T-cell (primary cell): ENCODE measurements at regions of chr13 and their contacts with region 1.

Region 1: DNA sequence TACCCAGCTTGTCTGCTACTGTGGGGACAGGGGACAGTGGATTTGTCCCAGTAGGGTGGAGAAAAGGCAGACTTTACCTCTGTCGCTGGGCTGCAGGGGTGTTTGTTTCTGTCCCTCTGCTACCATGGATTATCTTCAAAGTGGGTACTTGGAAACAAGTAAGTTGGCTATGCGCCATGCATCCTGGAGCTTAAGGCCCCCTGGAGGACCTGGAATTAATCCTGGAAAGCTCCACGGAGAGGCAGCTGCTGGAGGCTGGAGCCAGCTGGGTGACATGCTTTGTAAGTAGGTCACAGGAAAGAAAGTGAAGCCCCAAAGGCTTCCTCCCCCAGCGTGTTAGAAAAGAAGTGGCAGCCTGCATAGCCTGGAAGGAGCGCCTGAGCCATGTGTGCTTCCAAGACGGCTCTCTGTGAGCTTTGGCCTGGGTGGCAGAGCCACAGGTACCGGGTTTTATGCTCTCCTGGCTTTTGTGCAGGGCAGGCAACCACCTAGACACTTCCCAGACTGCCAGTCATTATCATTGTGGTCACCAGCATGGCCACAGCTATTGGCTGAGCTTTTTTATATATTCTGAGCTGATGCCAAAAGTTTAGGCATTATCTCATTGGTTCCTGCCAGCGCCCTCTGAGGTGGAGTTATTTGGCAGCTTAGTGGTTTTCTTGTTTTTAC is 9.5 kb downstream of the B3GLCT start:
- DNase-seq: peak in 3 of 35 experiments; percentile 3 to 27 (median 8)
- ATAC-seq: peak in 2 of 4 experiments; percentile 40 to 55
- H3K4me3 ChIP-seq: no peak overlapping the region
- H3K4me3 Mint-ChIP-seq: no peak overlapping the region
- H3K27ac ChIP-seq: no peak overlapping the region
- H3K27ac Mint-ChIP-seq: peak overlapping the region; percentile 56 to 61
- H3K4me1 ChIP-seq: peaks cover 0 to 9% of the 10 kb centered on the region in 2 experiments
- H3K4me1 Mint-ChIP-seq: peaks cover 9 to 30% (median 23%) of the 10 kb centered on the region in 3 donors
- H3K27me3 ChIP-seq: no peaks in the 10 kb centered on the region
- H3K27me3 Mint-ChIP-seq: no peaks in the 10 kb centered on the region

Region 2: GRCh38 chr13:30808589-30808988 is 400.7 kb before region 1 on chr13:
- CTCF ChIA-PET with region 1: no interaction called
- POLR2A ChIA-PET with region 1: no interaction called
- DNase-seq: no peak
- ATAC-seq: no peak
- H3K4me3 ChIP-seq: no peak overlapping the region
- H3K4me3 Mint-ChIP-seq: no peak overlapping the region
- H3K27ac ChIP-seq: no peak overlapping the region
- H3K27ac Mint-ChIP-seq: no peak overlapping the region
- H3K4me1 ChIP-seq: no peaks in the 10 kb centered on the region
- H3K4me1 Mint-ChIP-seq: peaks cover 0 to 2% (median 0%) of the 10 kb centered on the region in 3 donors
- H3K27me3 ChIP-seq: peaks cover 0 to 4% of the 10 kb centered on the region in 2 experiments
- H3K27me3 Mint-ChIP-seq: no peaks in the 10 kb centered on the region

Region 3: GRCh38 chr13:31328549-31329235 is 119.4 kb after region 1 on chr13:
- CTCF ChIA-PET with region 1: no interaction called
- POLR2A ChIA-PET with region 1: no interaction called
- DNase-seq: no peak
- ATAC-seq: no peak
- H3K4me3 ChIP-seq: no peak overlapping the region
- H3K4me3 Mint-ChIP-seq: no peak overlapping the region
- H3K27ac ChIP-seq: no peak overlapping the region
- H3K27ac Mint-ChIP-seq: no peak overlapping the region
- H3K4me1 ChIP-seq: no peaks in the 10 kb centered on the region
- H3K4me1 Mint-ChIP-seq: no peaks in the 10 kb centered on the region
- H3K27me3 ChIP-seq: no peaks in the 10 kb centered on the region
- H3K27me3 Mint-ChIP-seq: no peaks in the 10 kb centered on the region

Region 4: GRCh38 chr13:31424117-31424729 is 214.9 kb after region 1 on chr13:
- CTCF ChIA-PET with region 1: no interaction called
- POLR2A ChIA-PET with region 1: interaction called in 1 of 2 experiments, 13 read pairs
- DNase-seq: peak in 32 of 35 experiments; percentile 2 to 57 (median 22)
- ATAC-seq: peak; percentile 57 to 73 (median 68)
- H3K4me3 ChIP-seq: no peak overlapping the region
- H3K4me3 Mint-ChIP-seq: no peak overlapping the region
- H3K27ac ChIP-seq: no peak overlapping the region
- H3K27ac Mint-ChIP-seq: no peak overlapping the region
- H3K4me1 ChIP-seq: no peaks in the 10 kb centered on the region
- H3K4me1 Mint-ChIP-seq: peaks cover 0 to 4% (median 2%) of the 10 kb centered on the region in 3 donors
- H3K27me3 ChIP-seq: peaks cover 0 to 4% of the 10 kb centered on the region in 2 experiments
- H3K27me3 Mint-ChIP-seq: peaks cover 10 to 11% of the 10 kb centered on the region in 2 donors